Posterior cingulate gyrus (tissue), 11 donors: ENCODE measurements at regions of chr6 and their contacts with region 1.

Region 1: GRCh38 chr6:52788478-52788877 is 15.1 kb downstream of the GSTA1 start:
- DNase-seq: no peak

Region 2: DNA sequence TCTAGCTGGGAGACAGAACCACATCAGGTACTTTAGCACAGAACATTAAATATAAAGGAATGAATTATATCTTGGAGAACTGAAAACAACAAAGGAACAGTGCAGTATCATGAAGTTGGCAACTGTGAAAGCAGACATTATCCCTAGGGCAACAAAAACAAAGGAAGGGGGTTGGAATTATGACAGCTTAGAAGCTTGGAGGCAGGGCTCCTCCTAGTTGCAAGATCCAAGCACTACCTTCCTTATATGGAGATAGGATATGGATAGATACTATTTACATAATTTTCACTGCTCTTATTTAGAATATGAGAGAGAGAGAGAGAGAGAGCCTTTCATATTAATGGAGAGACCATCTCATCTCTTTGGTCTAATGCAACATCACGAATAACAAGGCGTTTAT is 90.6 kb before region 1 on chr6:
- intact Hi-C with region 1: no loop called
- DNase-seq: no peak

Region 3: DNA sequence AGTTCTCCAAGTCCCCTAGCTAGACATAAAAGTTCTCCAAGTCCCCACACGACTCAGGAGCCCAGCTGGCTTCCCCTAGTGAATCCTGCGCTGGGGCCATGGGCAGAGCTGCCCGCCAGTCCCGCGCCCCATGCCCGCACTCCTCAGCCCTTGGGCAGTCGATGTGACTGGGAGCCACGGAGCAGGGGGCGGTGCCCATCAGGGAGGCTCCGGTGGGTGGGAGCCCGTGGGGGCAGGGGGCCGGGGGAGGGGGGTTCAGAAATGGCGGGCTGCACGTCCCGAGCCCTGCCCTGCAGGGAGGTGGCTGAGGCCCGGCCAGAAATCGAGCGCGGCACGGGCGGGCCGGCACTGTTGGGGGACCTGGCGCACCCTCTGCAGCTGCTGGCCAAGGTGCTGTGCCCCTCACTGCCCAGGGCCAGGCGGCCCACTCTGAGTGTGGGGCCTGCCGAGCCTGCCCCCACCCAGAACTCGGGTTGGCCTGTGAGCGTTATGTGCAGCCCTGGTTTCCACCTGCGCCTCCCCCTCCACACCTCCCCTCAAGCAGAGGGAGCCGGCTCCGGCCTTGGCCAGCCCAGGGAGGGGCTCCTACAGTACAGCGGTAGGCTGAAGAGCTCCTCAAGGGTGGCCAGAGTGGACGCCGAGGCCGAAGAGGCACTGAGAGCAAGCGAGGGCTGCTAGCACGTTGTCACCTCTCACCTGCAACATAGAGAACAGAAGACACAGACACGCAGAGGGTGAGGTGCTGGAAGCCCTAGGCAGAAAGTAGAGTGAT is 40.8 kb after region 1 on chr6:
- intact Hi-C with region 1: loop called (anchors 5 kb)
- DNase-seq: peak in 1 of 10 donors; percentile 80